Calu3 (cell line): ENCODE measurements at regions of chr3 and their contacts with region 1.

Region 1: DNA sequence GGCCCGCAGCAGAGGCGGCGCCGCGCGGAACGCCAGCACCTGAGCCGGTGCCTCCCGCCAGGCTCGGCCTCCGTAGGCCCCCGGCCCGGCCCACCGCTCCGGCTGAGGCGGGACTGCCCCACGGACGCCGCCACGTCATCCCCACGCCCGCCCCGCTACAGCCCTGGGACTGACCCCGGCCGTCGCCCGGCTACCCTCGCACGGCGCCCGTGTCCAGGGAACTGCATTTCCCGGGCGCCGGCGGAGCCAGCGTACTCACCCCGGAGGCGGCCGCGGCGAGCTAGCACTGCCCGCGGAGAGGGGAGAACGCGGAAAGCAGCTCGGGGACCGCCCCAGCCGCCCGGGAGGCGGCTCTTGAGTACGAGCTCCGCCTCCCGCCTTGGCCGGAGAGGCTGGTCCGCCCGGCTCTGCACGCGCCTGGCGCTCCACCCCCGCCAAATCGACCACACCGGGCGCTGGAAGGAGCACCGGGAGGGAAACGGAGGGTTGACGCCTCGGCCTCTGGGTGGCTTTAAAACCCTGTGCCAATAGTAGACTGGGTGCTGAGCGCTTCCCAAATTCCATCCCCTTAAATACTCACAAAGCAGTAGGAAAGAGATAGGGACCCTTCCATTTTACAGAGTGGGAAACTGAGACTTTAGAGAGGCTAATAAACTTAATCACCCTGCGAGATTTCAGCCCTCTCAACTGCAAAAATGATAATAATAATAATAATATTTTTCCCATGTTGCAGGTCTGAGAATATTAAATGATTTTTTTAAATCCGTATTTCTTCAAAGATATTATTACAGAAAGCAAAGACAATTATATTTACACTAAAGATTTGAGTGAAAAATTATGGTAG is at the start of gene B4GALT4:
- DNase-seq: peak; percentile 91
- H3K4me3 Mint-ChIP-seq: peak within 1 kb of the TSS; percentile 96
- H3K27ac Mint-ChIP-seq: peak within 1 kb of the TSS; percentile 89
- H3K4me1 Mint-ChIP-seq: no peaks in the 10 kb centered on the region
- H3K27me3 Mint-ChIP-seq: no peaks in the 10 kb centered on the region
- CTCF ChIP-seq: no peak
- total RNA-seq, gene B4GALT4: 38.7 and 48.1 TPM in 2 replicates

Region 2: DNA sequence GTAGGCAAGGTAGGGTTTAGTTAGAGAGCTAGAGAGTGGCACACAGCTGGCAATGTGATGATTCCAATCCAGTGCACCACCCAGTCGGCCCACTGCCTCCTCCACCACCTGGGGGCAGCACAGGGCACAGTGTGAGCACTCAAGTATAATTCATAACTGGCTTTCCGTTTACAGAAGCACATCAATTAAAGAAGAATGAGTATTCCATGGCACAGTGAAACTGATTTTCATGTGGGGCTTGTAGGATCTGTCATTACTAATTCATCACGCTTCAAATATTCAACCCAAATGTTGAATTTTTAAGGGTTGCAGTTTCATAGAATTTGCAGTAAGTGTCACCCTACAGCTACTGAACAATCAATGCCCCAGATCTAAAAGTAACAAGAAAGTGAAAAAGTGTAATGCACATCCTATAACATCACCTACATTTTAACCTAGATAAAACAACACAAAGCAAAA is 356.0 kb before region 1 on chr3:
- CTCF ChIA-PET with region 1: interaction called, 24 read pairs
- intact Hi-C with region 1: loop called (anchors 2 kb)
- DNase-seq: peak; percentile 87
- H3K4me3 Mint-ChIP-seq: no peak overlapping the region
- H3K27ac Mint-ChIP-seq: no peak overlapping the region
- H3K4me1 Mint-ChIP-seq: no peaks in the 10 kb centered on the region
- H3K27me3 Mint-ChIP-seq: peaks cover 32% of the 10 kb centered on the region
- CTCF ChIP-seq: peak; percentile 78

Region 3: GRCh38 chr3:119098619-119099222 is 142.1 kb before region 1 on chr3:
- CTCF ChIA-PET with region 1: interaction called, 10 read pairs
- intact Hi-C with region 1: loop called (anchors 2 kb)
- DNase-seq: peak; percentile 34
- H3K4me3 Mint-ChIP-seq: no peak overlapping the region
- H3K27ac Mint-ChIP-seq: no peak overlapping the region
- H3K4me1 Mint-ChIP-seq: no peaks in the 10 kb centered on the region
- H3K27me3 Mint-ChIP-seq: no peaks in the 10 kb centered on the region
- CTCF ChIP-seq: peak; percentile 54

Region 4: DNA sequence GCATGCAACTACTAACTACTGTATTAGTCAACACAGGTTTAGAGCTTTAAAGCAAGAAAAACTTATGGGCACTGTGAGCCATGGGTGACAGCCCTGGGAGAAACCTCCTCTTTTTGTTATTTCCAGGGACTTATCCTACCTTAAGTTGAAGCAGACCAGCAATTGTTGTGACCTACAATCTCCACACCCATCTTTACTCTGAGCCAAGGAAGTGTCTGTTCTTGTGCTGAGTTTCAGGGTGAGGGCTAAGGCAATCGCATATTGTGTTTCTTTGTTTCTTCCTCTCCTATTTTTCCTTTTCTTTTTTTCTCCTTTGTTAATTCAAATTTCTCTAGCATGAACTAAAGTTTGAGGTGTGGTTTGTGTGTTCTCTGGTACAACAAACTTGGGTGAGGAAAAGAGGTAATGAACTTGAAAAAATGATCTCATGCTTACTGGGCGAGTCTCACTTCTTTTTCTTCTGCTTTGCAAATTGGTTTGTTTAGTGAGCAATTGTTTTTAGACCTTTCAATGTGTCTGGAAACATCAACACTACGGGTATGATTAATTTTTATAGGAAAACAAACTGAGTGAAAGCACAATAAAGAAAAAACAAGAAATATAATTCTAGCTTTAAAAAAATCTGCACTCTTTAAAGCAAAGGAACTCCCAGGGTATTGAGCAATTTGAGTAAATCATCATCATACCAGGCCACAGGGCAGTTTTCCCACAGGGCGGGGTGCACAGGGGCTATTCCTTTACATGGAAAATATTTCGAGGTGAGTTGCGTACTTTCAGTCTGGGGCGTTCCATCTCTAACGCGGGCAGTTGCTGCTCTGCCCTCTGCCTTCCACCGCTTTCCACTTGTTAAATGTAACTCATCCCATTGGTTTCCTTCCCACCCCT is 64.7 kb before region 1 on chr3:
- CTCF ChIA-PET with region 1: no interaction called
- intact Hi-C with region 1: loop called (anchors 5 kb)
- DNase-seq: peak; percentile 66
- H3K4me3 Mint-ChIP-seq: peak overlapping the region; percentile 64
- H3K27ac Mint-ChIP-seq: peak overlapping the region; percentile 91
- H3K4me1 Mint-ChIP-seq: peaks cover 51% of the 10 kb centered on the region
- H3K27me3 Mint-ChIP-seq: no peaks in the 10 kb centered on the region
- CTCF ChIP-seq: no peak

Region 5: GRCh38 chr3:119352849-119353502 is 112.2 kb after region 1 on chr3:
- CTCF ChIA-PET with region 1: interaction called, 11 read pairs
- intact Hi-C with region 1: no loop called
- DNase-seq: peak; percentile 13
- H3K4me3 Mint-ChIP-seq: no peak overlapping the region
- H3K27ac Mint-ChIP-seq: no peak overlapping the region
- H3K4me1 Mint-ChIP-seq: peaks cover 19% of the 10 kb centered on the region
- H3K27me3 Mint-ChIP-seq: peaks cover 19% of the 10 kb centered on the region
- CTCF ChIP-seq: no peak